B cell (primary cell): ENCODE measurements at regions of chr22 and their contacts with region 1.

Region 1: GRCh38 chr22:28009272-28009827 is 90.3 kb upstream of the PITPNB start:
- DNase-seq: peak; percentile 80
- ATAC-seq: peak; percentile 76
- H3K4me3 ChIP-seq: no peak overlapping the region
- H3K4me3 Mint-ChIP-seq: no peak overlapping the region
- H3K27ac ChIP-seq: no peak overlapping the region
- H3K27ac Mint-ChIP-seq: no peak overlapping the region
- H3K4me1 ChIP-seq: no peaks in the 10 kb centered on the region
- H3K4me1 Mint-ChIP-seq: no peaks in the 10 kb centered on the region
- H3K27me3 ChIP-seq: no peaks in the 10 kb centered on the region
- H3K27me3 Mint-ChIP-seq: no peaks in the 10 kb centered on the region
- CTCF ChIP-seq: peak; percentile 98

Region 2: GRCh38 chr22:26679003-26679629 is 1330.2 kb before region 1 on chr22:
- CTCF ChIA-PET with region 1: interaction called, 3 read pairs
- POLR2A ChIA-PET with region 1: no interaction called
- intact Hi-C with region 1: loop called (anchors 5 kb)
- DNase-seq: peak; percentile 73
- ATAC-seq: peak; percentile 87
- H3K4me3 ChIP-seq: no peak overlapping the region
- H3K4me3 Mint-ChIP-seq: no peak overlapping the region
- H3K27ac ChIP-seq: no peak overlapping the region
- H3K27ac Mint-ChIP-seq: peak overlapping the region; percentile 72
- H3K4me1 ChIP-seq: peaks cover 25 to 40% of the 10 kb centered on the region in 2 donors
- H3K4me1 Mint-ChIP-seq: peaks cover 48% of the 10 kb centered on the region
- H3K27me3 ChIP-seq: no peaks in the 10 kb centered on the region
- H3K27me3 Mint-ChIP-seq: no peaks in the 10 kb centered on the region
- CTCF ChIP-seq: peak; percentile 90

Region 3: DNA sequence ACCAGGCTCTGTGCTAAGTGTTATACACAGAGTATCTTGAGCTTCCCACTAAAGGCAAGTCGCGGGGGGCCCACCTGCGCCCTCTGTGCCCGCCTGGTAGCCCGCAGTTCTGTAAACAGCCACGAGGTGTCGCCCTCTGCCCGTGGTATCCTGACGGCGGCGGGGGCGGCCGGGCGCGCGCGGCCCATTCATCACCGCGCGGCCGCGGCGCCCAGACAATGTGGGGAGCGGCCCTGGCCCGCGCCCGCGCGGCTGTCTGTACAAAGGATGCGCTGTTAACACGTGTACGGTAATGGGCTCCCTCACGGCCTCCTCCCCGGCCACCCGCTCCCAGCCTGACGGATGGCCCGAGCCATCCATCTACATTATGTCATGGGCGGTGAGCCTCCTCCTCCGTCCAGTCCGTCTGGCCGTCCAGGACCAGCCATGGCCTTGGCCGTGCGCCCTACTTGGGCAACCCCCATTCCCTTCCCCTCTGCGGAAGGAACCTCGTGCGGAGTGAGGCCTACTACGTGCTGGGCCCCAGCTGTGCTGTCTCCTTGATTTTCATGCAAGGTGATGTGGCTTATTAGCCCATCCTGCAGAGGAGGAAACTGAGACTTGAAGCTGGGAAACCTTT is 1252.6 kb before region 1 on chr22:
- CTCF ChIA-PET with region 1: no interaction called
- POLR2A ChIA-PET with region 1: no interaction called
- intact Hi-C with region 1: loop called (anchors 5 kb)
- DNase-seq: peak; percentile 43
- ATAC-seq: peak; percentile 60
- H3K4me3 ChIP-seq: no peak overlapping the region
- H3K4me3 Mint-ChIP-seq: no peak overlapping the region
- H3K27ac ChIP-seq: no peak overlapping the region
- H3K27ac Mint-ChIP-seq: no peak overlapping the region
- H3K4me1 ChIP-seq: no peaks in the 10 kb centered on the region
- H3K4me1 Mint-ChIP-seq: peaks cover 5% of the 10 kb centered on the region
- H3K27me3 ChIP-seq: no peaks in the 10 kb centered on the region
- H3K27me3 Mint-ChIP-seq: no peaks in the 10 kb centered on the region
- CTCF ChIP-seq: peak; percentile 69

Region 4: GRCh38 chr22:27880778-27881394 is 128.5 kb before region 1 on chr22:
- CTCF ChIA-PET with region 1: interaction called, 342 read pairs
- POLR2A ChIA-PET with region 1: no interaction called
- intact Hi-C with region 1: loop called (anchors 1 kb)
- DNase-seq: peak; percentile 60
- ATAC-seq: peak; percentile 45
- H3K4me3 ChIP-seq: no peak overlapping the region
- H3K4me3 Mint-ChIP-seq: no peak overlapping the region
- H3K27ac ChIP-seq: no peak overlapping the region
- H3K27ac Mint-ChIP-seq: no peak overlapping the region
- H3K4me1 ChIP-seq: peaks cover 0 to 3% of the 10 kb centered on the region in 2 donors
- H3K4me1 Mint-ChIP-seq: peaks cover 7% of the 10 kb centered on the region
- H3K27me3 ChIP-seq: no peaks in the 10 kb centered on the region
- H3K27me3 Mint-ChIP-seq: no peaks in the 10 kb centered on the region
- CTCF ChIP-seq: peak; percentile 79

Region 5: GRCh38 chr22:28142361-28142961 is 133.1 kb after region 1 on chr22:
- CTCF ChIA-PET with region 1: no interaction called
- POLR2A ChIA-PET with region 1: no interaction called
- intact Hi-C with region 1: no loop called
- DNase-seq: no peak
- ATAC-seq: no peak
- H3K4me3 ChIP-seq: no peak overlapping the region
- H3K4me3 Mint-ChIP-seq: no peak overlapping the region
- H3K27ac ChIP-seq: no peak overlapping the region
- H3K27ac Mint-ChIP-seq: no peak overlapping the region
- H3K4me1 ChIP-seq: no peaks in the 10 kb centered on the region
- H3K4me1 Mint-ChIP-seq: no peaks in the 10 kb centered on the region
- H3K27me3 ChIP-seq: peaks cover 0 to 2% (median 1%) of the 10 kb centered on the region in 4 experiments
- H3K27me3 Mint-ChIP-seq: no peaks in the 10 kb centered on the region
- CTCF ChIP-seq: no peak